ENCODE measurements at regions of chr7 and their contacts with region 1.

Region 1: GRCh38 chr7:102891693-102892261 is 21.0 kb upstream of the LRRC17 start:
- DNase-seq: peak; percentile 90
- ATAC-seq: peak; percentile 88
- H3K4me3 ChIP-seq: peak overlapping the region; percentile 30; the same call in 1 of the 2 replicates
- H3K27ac ChIP-seq: peak overlapping the region; percentile 74
- H3K4me1 ChIP-seq: peaks cover 45% of the 10 kb centered on the region
- H3K27me3 ChIP-seq: no peaks in the 10 kb centered on the region
- CTCF ChIP-seq: no peak

Region 2: GRCh38 chr7:102916426-102916825 is 24.6 kb after region 1 on chr7:
- CTCF ChIA-PET with region 1: no interaction called
- POLR2A ChIA-PET with region 1: interaction called, 12 read pairs
- intact Hi-C with region 1: no loop called
- DNase-seq: peak; percentile 85
- ATAC-seq: peak; percentile 94
- H3K4me3 ChIP-seq: no peak overlapping the region
- H3K27ac ChIP-seq: no peak overlapping the region
- H3K4me1 ChIP-seq: peaks cover 12% of the 10 kb centered on the region
- H3K27me3 ChIP-seq: no peaks in the 10 kb centered on the region
- CTCF ChIP-seq: no peak

Region 3: GRCh38 chr7:102925976-102926782 is 34.4 kb after region 1 on chr7:
- CTCF ChIA-PET with region 1: no interaction called
- POLR2A ChIA-PET with region 1: no interaction called
- intact Hi-C with region 1: loop called (anchors 5 kb)
- DNase-seq: peak; percentile 12
- ATAC-seq: no peak
- H3K4me3 ChIP-seq: no peak overlapping the region
- H3K27ac ChIP-seq: no peak overlapping the region
- H3K4me1 ChIP-seq: peaks cover 14% of the 10 kb centered on the region; the same call in 1 of the 2 replicates
- H3K27me3 ChIP-seq: no peaks in the 10 kb centered on the region
- CTCF ChIP-seq: no peak

Region 4: GRCh38 chr7:103065667-103066066 is 173.9 kb after region 1 on chr7:
- CTCF ChIA-PET with region 1: interaction called, 3 read pairs
- POLR2A ChIA-PET with region 1: no interaction called
- intact Hi-C with region 1: loop called (anchors 10 kb)
- DNase-seq: peak; percentile 62
- ATAC-seq: peak; percentile 69
- H3K4me3 ChIP-seq: no peak overlapping the region
- H3K27ac ChIP-seq: no peak overlapping the region
- H3K4me1 ChIP-seq: peaks cover 6% of the 10 kb centered on the region; the same call in 1 of the 2 replicates
- H3K27me3 ChIP-seq: no peaks in the 10 kb centered on the region
- CTCF ChIP-seq: peak; percentile 74

Measured in PC-3 (cell line).